ENCODE measurements at regions of chr7 and their contacts with region 1.

Region 1: GRCh38 chr7:73858807-73859206 is 2.2 kb upstream of the TMEM270 start:
- DNase-seq: no peak
- H3K4me3 ChIP-seq: no peak overlapping the region
- H3K27ac ChIP-seq: no peak overlapping the region
- H3K4me1 ChIP-seq: no peaks in the 10 kb centered on the region; a peak in 1 of 4 replicates
- H3K27me3 ChIP-seq: no peaks in the 10 kb centered on the region
- CTCF ChIP-seq: no peak
- EP300 ChIP-seq: no peak
- RAD21 ChIP-seq: no peak

Region 2: GRCh38 chr7:73822319-73823076 is 36.3 kb before region 1 on chr7:
- CTCF ChIA-PET with region 1: interaction called, 47 read pairs
- POLR2A ChIA-PET with region 1: no interaction called
- DNase-seq: peak; percentile 70
- H3K4me3 ChIP-seq: no peak overlapping the region; a peak in 1 of 4 replicates
- H3K27ac ChIP-seq: peak overlapping the region; percentile 2 to 93; a peak in 3 of 4 replicates
- H3K4me1 ChIP-seq: peaks cover 10 to 22% of the 10 kb centered on the region in 2 experiments
- H3K27me3 ChIP-seq: no peaks in the 10 kb centered on the region
- CTCF ChIP-seq: no peak
- EP300 ChIP-seq: peak; percentile 21 to 95; a peak in 2 of 4 replicates
- RAD21 ChIP-seq: no peak

Region 3: DNA sequence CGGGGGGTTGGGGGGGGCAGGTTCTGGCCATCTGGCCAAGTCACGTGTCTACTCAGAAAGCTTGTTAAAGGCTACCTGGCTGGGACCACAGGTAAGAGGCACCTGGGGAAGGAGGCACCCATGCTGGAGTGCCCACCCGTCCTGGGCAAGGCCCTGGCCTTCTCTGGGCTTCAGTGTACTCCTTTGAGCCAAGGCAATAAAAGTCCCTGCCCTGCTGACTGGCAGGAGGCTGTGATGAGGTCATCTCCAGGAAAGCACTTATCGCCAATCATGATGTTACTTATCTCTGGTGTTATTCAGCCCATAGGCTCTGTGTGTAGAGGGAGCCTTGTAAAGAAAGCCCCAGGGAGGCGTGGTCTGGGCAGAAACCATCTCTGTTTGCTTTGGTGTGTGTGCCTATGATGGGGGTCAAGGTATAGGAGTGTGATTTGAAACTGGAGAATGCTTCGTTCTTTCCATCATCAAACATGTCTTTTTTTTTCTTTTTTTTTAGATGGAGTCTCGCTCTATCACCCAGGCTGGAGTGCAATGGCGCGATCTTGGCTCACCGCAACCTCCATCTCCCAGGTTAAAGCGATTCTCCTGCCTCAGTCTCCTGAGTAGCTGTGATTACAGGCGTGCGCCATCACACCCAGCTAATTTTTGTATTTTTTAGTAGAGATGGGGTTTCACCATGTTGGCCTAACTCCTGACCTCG is 30.6 kb before region 1 on chr7:
- CTCF ChIA-PET with region 1: interaction called, 47 read pairs
- POLR2A ChIA-PET with region 1: no interaction called
- DNase-seq: peak; percentile 93
- H3K4me3 ChIP-seq: no peak overlapping the region
- H3K27ac ChIP-seq: peak overlapping the region; percentile 19 to 94; a peak in 3 of 4 replicates
- H3K4me1 ChIP-seq: peaks cover 21 to 54% of the 10 kb centered on the region in 2 experiments
- H3K27me3 ChIP-seq: no peaks in the 10 kb centered on the region
- CTCF ChIP-seq: no peak
- EP300 ChIP-seq: no peak; a peak in 1 of 4 replicates
- RAD21 ChIP-seq: no peak; the same call in 1 of the 2 replicates

Region 4: GRCh38 chr7:73842247-73842895 is 16.4 kb before region 1 on chr7 and contains the start of gene METTL27:
- CTCF ChIA-PET with region 1: interaction called, 80 read pairs
- POLR2A ChIA-PET with region 1: no interaction called
- DNase-seq: peak; percentile 100
- H3K4me3 ChIP-seq: peak within 1 kb of the TSS; percentile 57 to 99
- H3K27ac ChIP-seq: peak within 1 kb of the TSS; percentile 57 to 76; a peak in 3 of 4 replicates
- H3K4me1 ChIP-seq: peaks cover 0 to 8% of the 10 kb centered on the region in 2 experiments; a peak in 1 of 4 replicates
- H3K27me3 ChIP-seq: no peaks in the 10 kb centered on the region
- CTCF ChIP-seq: no peak
- EP300 ChIP-seq: no peak
- RAD21 ChIP-seq: no peak
- polyA plus RNA-seq, gene METTL27: 2.9 and 3.1 TPM in 2 replicates

Region 5: GRCh38 chr7:73909051-73909941 is 50.5 kb after region 1 on chr7:
- CTCF ChIA-PET with region 1: no interaction called
- POLR2A ChIA-PET with region 1: no interaction called
- DNase-seq: peak; percentile 16
- H3K4me3 ChIP-seq: no peak overlapping the region
- H3K27ac ChIP-seq: no peak overlapping the region
- H3K4me1 ChIP-seq: no peaks in the 10 kb centered on the region; a peak in 1 of 4 replicates
- H3K27me3 ChIP-seq: no peaks in the 10 kb centered on the region
- CTCF ChIP-seq: no peak
- EP300 ChIP-seq: no peak
- RAD21 ChIP-seq: no peak

Measured in SK-N-SH (cell line).